Left ventricle myocardium inferior (tissue), 1 donor: ENCODE measurements at regions of chr12 and their contacts with region 1.

Region 1: GRCh38 chr12:64431791-64432190 is 20.1 kb upstream of the TBK1 start:
- DNase-seq: no peak
- H3K4me3 ChIP-seq: no peak overlapping the region
- H3K27ac ChIP-seq: no peak overlapping the region
- H3K4me1 ChIP-seq: no peaks in the 10 kb centered on the region
- H3K27me3 ChIP-seq: no peaks in the 10 kb centered on the region
- CTCF ChIP-seq: no peak

Region 2: DNA sequence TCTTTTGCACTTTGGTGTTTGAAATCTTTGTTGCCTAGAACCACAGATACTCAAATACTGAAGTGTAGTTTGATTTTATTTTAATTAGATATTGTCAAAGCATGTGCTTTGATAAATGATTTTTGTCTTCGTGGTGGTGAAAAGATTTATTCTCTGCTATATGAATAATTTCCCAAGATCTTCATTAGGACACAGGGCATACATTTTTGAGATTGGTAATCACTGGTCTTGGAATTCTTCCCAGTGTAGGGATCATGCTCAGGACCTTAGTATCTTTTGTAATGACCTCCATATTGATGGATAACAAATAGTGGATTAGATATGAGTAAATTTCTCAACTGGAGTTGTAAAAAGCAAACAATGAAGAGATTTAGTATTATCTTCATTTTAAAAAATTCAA is 48.4 kb after region 1 on chr12:
- intact Hi-C with region 1: loop called (anchors 10 kb)
- DNase-seq: no peak
- H3K4me3 ChIP-seq: no peak overlapping the region
- H3K27ac ChIP-seq: no peak overlapping the region
- H3K4me1 ChIP-seq: no peaks in the 10 kb centered on the region
- H3K27me3 ChIP-seq: no peaks in the 10 kb centered on the region
- CTCF ChIP-seq: no peak

Region 3: DNA sequence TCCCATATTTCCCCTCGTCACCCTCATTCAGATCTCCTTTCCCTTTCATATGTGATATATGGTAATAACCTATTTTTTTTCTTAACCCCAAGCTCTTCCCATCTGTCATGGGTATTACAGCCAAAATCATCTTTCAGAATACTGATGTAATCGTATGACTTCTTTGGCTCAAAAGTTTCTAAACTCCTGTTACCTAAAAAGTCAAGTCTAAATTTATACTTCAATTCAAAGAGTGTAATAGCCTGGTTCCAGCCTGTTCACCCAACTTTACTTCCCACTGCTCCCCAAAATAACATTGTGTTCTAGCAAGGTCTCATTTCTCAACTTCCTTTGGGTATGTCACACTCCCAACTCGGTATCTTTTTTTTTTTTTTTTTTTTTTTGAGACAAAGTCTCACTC is 68.6 kb after region 1 on chr12:
- intact Hi-C with region 1: no loop called
- DNase-seq: no peak
- H3K4me3 ChIP-seq: no peak overlapping the region
- H3K27ac ChIP-seq: no peak overlapping the region
- H3K4me1 ChIP-seq: no peaks in the 10 kb centered on the region
- H3K27me3 ChIP-seq: no peaks in the 10 kb centered on the region
- CTCF ChIP-seq: no peak

Region 4: DNA sequence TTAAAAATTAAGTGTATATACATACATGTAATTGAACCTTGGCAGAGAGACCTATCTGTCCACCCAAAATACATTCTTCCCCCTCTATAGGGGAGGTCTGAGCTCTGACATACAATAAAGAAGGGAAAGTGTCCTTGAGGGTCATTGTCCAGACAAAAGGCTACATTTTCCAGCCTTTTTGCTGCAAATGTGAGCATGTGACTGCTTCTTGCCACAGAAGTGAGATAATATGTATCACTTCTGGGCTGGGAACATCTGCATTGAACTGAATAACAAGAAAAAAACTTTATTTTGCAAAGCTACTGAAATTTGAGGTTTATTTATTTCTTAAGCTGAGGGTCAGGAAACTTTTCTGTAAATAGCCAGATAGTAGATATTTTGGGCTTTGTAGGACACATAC is 524.0 kb after region 1 on chr12:
- intact Hi-C with region 1: no loop called
- DNase-seq: no peak
- H3K4me3 ChIP-seq: no peak overlapping the region
- H3K27ac ChIP-seq: no peak overlapping the region
- H3K4me1 ChIP-seq: no peaks in the 10 kb centered on the region
- H3K27me3 ChIP-seq: peaks cover 8% of the 10 kb centered on the region
- CTCF ChIP-seq: no peak

Region 5: GRCh38 chr12:65269603-65270002 is 837.8 kb after region 1 on chr12:
- intact Hi-C with region 1: no loop called
- DNase-seq: no peak
- H3K4me3 ChIP-seq: no peak overlapping the region
- H3K27ac ChIP-seq: no peak overlapping the region
- H3K4me1 ChIP-seq: no peaks in the 10 kb centered on the region
- H3K27me3 ChIP-seq: no peaks in the 10 kb centered on the region
- CTCF ChIP-seq: no peak